Body of pancreas (tissue), 4 donors: ENCODE measurements at regions of chr1 and their contacts with region 1.

Region 1: GRCh38 chr1:7669559-7670311 is 101.4 kb upstream of the VAMP3 start:
- DNase-seq: peak; percentile 49 to 68 (median 56)
- ATAC-seq: peak; percentile 49
- H3K4me3 ChIP-seq: no peak overlapping the region
- H3K27ac ChIP-seq: no peak overlapping the region
- H3K4me1 ChIP-seq: peaks cover 15% of the 10 kb centered on the region
- H3K27me3 ChIP-seq: no peaks in the 10 kb centered on the region
- CTCF ChIP-seq: peak; percentile 62 to 86 (median 68)
- POLR2A ChIP-seq: no peak

Region 2: DNA sequence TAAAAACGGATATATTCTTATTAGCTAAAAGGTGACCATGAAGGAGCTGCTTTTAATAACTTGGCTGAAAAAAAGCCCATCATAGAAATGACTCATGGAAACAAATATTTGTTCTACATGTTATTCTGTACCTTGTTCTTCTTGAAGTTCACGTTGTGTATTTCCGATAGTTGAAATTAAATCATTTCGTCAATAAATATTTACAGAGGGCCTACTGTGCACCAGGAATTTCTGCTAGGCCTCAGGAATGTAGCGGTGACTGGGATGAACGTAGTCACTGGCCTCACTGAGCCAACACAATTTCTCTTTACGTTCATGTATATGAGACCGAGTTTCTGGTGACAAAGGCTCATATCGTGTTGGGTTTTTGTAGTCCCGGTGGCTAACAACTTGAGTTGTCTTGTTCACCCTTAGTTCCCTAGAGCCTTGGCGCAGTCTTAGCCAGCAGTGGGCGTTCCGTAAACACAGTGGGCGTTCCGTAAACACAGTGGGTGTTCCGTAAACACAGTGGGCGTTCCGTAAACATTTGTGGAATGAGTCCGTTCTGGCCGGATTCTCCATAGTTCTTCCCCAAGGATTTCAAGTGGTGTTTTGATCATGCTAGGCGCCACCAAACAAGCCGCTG is 48.1 kb after region 1 on chr1:
- intact Hi-C with region 1: no loop called
- DNase-seq: no peak
- ATAC-seq: no peak
- H3K4me3 ChIP-seq: no peak overlapping the region
- H3K27ac ChIP-seq: no peak overlapping the region
- H3K4me1 ChIP-seq: no peaks in the 10 kb centered on the region
- H3K27me3 ChIP-seq: no peaks in the 10 kb centered on the region
- CTCF ChIP-seq: no peak
- POLR2A ChIP-seq: no peak

Region 3: GRCh38 chr1:7893529-7894180 is 223.9 kb after region 1 on chr1:
- intact Hi-C with region 1: loop called (anchors 10 kb)
- DNase-seq: no peak
- ATAC-seq: no peak
- H3K4me3 ChIP-seq: no peak overlapping the region
- H3K27ac ChIP-seq: no peak overlapping the region
- H3K4me1 ChIP-seq: no peaks in the 10 kb centered on the region
- H3K27me3 ChIP-seq: no peaks in the 10 kb centered on the region
- CTCF ChIP-seq: no peak
- POLR2A ChIP-seq: no peak